Prostate gland (tissue), 2 donors: ENCODE measurements at regions of chr20 and their contacts with region 1.

Region 1: GRCh38 chr20:1466211-1467081 is at the start of gene NSFL1C:
- DNase-seq: peak; percentile 93
- H3K4me3 ChIP-seq: peak within 1 kb of the TSS; percentile 86 to 94
- H3K27ac ChIP-seq: peak within 1 kb of the TSS; percentile 76 to 79
- H3K4me1 ChIP-seq: peaks cover 18% of the 10 kb centered on the region
- H3K27me3 ChIP-seq: no peaks in the 10 kb centered on the region
- CTCF ChIP-seq: peak; percentile 96 to 98 (median 97)
- POLR2A ChIP-seq: peak; percentile 54
- total RNA-seq, gene NSFL1C: 43.0 to 54.5 TPM

Region 2: GRCh38 chr20:675453-676314 is 790.8 kb before region 1 on chr20 and contains the start of gene SCRT2:
- intact Hi-C with region 1: no loop called
- DNase-seq: peak; percentile 76
- H3K4me3 ChIP-seq: no peak within 1 kb of the TSS
- H3K27ac ChIP-seq: no peak within 1 kb of the TSS
- H3K4me1 ChIP-seq: no peaks in the 10 kb centered on the region
- H3K27me3 ChIP-seq: no peaks in the 10 kb centered on the region
- CTCF ChIP-seq: no peak
- POLR2A ChIP-seq: no peak
- total RNA-seq, gene SCRT2: 0.17 TPM in 1 of 2 donors, not detected in the other

Region 3: GRCh38 chr20:1118336-1119127 is 347.9 kb before region 1 on chr20 and contains the start of gene PSMF1:
- intact Hi-C with region 1: loop called (anchors 5 kb)
- DNase-seq: peak; percentile 90
- H3K4me3 ChIP-seq: peak within 1 kb of the TSS; percentile 71 to 87
- H3K27ac ChIP-seq: peak within 1 kb of the TSS; percentile 71 to 83
- H3K4me1 ChIP-seq: peaks cover 14% of the 10 kb centered on the region
- H3K27me3 ChIP-seq: no peaks in the 10 kb centered on the region
- CTCF ChIP-seq: peak in 2 of 4 experiments; percentile 49 to 50
- POLR2A ChIP-seq: peak; percentile 41
- total RNA-seq, gene PSMF1: 76.8 to 282 TPM

Region 4: GRCh38 chr20:1392823-1393506 is 73.5 kb before region 1 on chr20 and contains the start of gene FKBP1A:
- intact Hi-C with region 1: loop called (anchors 5 kb)
- DNase-seq: peak; percentile 87
- H3K4me3 ChIP-seq: peak within 1 kb of the TSS; percentile 88 to 96
- H3K27ac ChIP-seq: peak within 1 kb of the TSS; percentile 57 to 80
- H3K4me1 ChIP-seq: peaks cover 17% of the 10 kb centered on the region
- H3K27me3 ChIP-seq: no peaks in the 10 kb centered on the region
- CTCF ChIP-seq: peak in 3 of 4 experiments; percentile 21 to 49 (median 37)
- POLR2A ChIP-seq: peak; percentile 88
- total RNA-seq, gene FKBP1A: 103 to 161 TPM